Prostate gland (tissue), 2 donors: ENCODE measurements at regions of chr12 and their contacts with region 1.

Region 1: DNA sequence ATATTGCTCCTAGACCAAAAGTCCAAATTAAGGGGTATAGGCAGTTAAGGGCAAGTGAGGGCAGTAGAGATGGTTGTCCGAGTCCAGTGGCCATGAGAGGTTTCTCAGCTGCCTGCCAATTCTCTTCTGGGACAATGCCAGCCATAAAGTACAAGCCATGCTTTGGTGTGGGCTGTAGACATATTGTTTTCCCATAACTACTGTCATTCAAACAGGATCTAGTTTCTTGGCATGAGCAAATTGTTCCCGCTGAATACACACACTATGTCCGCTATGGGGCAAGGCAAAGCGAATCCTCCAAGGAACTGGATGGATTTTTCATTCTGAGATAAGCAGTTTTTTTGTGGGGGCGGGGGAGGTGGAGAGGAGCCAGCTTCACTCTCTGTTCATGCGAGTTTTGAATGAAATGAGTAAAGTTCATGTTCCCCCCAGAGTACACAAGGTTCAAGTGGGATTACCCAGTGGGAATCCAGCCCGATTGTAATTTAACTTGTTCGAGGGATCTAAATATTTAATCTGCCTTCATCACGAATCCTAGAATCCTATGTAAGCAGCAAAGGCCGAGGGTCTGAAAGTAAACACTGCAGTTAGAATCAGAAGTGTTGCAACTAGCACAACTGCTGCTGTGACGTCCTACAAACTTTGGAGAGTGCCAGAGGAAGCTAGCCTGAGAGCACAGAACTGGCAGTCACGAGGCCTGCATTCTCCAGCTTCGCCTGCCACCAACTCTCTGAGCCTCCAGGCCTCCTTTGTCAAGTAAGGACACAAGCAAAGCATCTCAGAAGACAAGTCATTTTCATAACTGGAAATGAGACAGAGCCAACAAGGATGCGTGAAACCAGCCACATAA is 137.0 kb downstream of the CRADD start:
- DNase-seq: peak; percentile 93
- H3K4me3 ChIP-seq: no peak overlapping the region
- H3K27ac ChIP-seq: peak overlapping the region; percentile 84 to 96
- H3K4me1 ChIP-seq: peaks cover 43% of the 10 kb centered on the region
- H3K27me3 ChIP-seq: no peaks in the 10 kb centered on the region
- CTCF ChIP-seq: peak in 1 of 4 experiments; percentile 3
- POLR2A ChIP-seq: no peak

Region 2: DNA sequence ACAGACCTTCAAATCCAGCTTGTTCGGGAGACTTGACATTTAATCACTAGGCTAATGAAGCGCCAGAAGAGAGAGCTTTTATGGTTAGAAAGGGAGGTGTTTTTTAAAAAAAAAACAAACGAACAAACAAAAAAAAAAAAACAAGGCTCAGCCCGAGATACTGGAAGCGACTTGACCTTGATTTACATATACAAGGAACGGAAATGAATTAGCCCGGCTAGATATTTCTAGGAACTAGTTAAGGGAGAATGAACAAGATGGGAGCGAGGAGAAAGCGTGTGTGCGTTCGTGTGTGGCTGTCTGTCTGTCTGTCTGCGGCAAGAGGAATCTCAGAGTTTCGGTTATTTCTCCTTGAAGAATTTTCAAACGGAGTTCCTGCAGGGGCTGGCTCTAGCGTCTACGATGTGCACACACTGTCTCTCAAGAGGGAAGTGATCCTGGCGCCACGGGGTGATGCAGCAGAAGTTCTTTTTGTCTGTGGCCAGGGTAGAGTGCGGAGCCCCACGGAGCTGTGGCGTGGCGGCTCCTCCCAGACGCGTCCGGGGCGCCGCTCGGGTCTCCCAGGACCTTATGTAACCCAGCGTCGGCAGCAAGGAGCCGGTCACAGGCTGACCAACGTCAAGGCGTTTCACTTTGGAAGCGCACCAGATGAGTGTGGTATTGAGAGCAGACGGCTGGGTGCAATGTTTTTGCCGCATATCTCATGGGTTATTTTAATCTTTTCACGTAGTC is 222.9 kb before region 1 on chr12:
- intact Hi-C with region 1: loop called (anchors 5 kb)
- DNase-seq: peak; percentile 60
- H3K4me3 ChIP-seq: peak overlapping the region; percentile 34 to 47
- H3K27ac ChIP-seq: peak overlapping the region; percentile 80 to 89
- H3K4me1 ChIP-seq: no peaks in the 10 kb centered on the region
- H3K27me3 ChIP-seq: no peaks in the 10 kb centered on the region
- CTCF ChIP-seq: no peak
- POLR2A ChIP-seq: peak; percentile 32

Region 3: GRCh38 chr12:93778306-93778705 is 35.9 kb before region 1 on chr12:
- intact Hi-C with region 1: loop called (anchors 5 kb)
- DNase-seq: peak; percentile 34
- H3K4me3 ChIP-seq: no peak overlapping the region
- H3K27ac ChIP-seq: peak overlapping the region; percentile 47 to 68
- H3K4me1 ChIP-seq: peaks cover 5% of the 10 kb centered on the region
- H3K27me3 ChIP-seq: no peaks in the 10 kb centered on the region
- CTCF ChIP-seq: no peak
- POLR2A ChIP-seq: no peak

Region 4: GRCh38 chr12:93785262-93786010 is 28.8 kb before region 1 on chr12:
- intact Hi-C with region 1: loop called (anchors 2 kb)
- DNase-seq: peak; percentile 33
- H3K4me3 ChIP-seq: no peak overlapping the region
- H3K27ac ChIP-seq: peak overlapping the region; percentile 82 to 87
- H3K4me1 ChIP-seq: peaks cover 10% of the 10 kb centered on the region
- H3K27me3 ChIP-seq: no peaks in the 10 kb centered on the region
- CTCF ChIP-seq: no peak
- POLR2A ChIP-seq: no peak

Region 5: GRCh38 chr12:93894391-93895088 is 80.3 kb after region 1 on chr12:
- intact Hi-C with region 1: loop called (anchors 5 kb)
- DNase-seq: peak; percentile 84
- H3K4me3 ChIP-seq: no peak overlapping the region
- H3K27ac ChIP-seq: peak overlapping the region; percentile 53 to 64
- H3K4me1 ChIP-seq: peaks cover 14% of the 10 kb centered on the region
- H3K27me3 ChIP-seq: no peaks in the 10 kb centered on the region
- CTCF ChIP-seq: peak in 1 of 4 experiments; percentile 5
- POLR2A ChIP-seq: no peak